Ascending aorta (tissue), 2 donors: ENCODE measurements at regions of chr3 and their contacts with region 1.

Region 1: DNA sequence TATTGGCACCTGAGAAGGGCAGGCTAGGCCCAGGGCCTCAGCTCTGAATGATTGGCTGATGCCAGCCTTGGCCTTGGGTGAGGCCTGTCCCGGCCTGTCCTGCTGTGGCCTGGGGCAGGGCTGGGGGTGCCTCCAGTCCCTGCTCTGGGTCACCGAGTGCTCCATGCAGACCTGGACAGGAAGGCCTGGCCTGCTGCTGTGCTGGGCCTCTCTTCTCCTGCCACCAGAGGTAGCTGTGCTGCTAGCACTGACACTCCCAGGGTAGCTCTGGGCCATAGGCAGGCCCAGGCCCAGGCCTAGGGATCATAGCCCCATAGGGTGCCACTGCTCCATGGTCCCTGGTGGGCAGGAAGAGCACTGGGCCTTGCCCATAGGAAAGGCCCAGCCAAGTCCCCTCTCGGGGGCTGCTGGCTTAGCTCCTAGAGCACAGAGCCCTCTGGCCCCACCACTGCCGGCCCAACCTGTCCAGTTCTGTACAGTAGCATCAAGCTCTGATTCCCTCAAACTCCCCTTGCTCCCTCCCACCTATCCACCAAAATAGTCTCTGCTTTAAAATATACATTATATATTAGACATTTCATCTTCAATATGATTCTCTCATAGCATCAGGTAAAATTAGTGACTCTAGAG is 18.2 kb downstream of the ABTB1 start:
- DNase-seq: no peak
- H3K4me3 ChIP-seq: no peak overlapping the region
- H3K27ac ChIP-seq: peak overlapping the region; percentile 85 to 89
- H3K4me1 ChIP-seq: peaks cover 29 to 32% of the 10 kb centered on the region in 2 donors
- H3K27me3 ChIP-seq: no peaks in the 10 kb centered on the region
- CTCF ChIP-seq: peak; percentile 60 to 73 (median 71)

Region 2: GRCh38 chr3:127015282-127016042 is 675.5 kb before region 1 on chr3:
- intact Hi-C with region 1: no loop called
- DNase-seq: no peak
- H3K4me3 ChIP-seq: no peak overlapping the region
- H3K27ac ChIP-seq: peak overlapping the region; percentile 64 to 76
- H3K4me1 ChIP-seq: peaks cover 26 to 51% of the 10 kb centered on the region in 2 donors
- H3K27me3 ChIP-seq: no peaks in the 10 kb centered on the region
- CTCF ChIP-seq: no peak

Region 3: DNA sequence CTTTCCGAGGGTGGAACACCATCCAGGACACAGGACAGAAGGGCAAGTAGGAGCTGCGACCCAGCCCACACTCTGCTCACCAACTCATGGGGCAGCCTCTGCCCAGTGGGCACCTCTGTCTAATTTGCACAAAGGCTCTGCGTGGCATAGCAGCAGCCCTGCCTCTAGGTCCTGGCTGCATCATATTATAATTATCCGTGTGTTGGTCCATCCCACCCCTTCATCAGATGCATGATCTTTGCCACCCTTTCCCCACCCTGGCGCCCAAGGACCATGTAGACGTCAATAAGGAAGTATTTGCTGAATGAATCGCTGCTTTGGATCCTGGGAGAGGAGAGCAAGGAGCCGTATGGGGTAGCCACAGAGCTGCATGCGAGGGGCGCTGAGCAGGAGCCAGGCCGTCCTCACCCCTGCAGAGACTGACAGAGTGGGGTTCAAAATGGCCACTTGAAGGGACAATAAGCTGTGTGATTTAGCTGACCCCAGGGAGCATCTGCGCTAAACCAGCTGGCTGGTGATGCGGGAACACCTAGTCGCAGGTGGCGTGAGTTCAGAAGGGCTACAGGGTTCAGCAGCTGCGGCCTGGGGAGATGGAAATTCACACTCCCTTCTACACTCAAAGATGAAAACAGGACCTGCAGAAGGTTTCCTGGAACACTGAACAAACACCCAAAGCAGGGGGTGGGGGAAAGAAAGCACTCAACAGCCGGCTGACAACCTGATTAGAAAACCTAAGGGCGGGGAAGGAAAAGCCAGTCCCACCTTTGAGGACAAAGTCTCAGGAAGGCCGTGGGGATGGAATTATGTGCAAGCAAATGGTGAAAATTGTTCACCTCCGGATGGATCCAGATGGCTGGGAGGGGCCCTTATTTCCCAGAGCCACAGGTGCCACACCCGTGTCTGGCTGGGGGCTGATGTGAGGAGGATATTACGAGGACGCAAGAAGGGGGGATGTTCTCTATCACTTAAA is 125.0 kb after region 1 on chr3:
- intact Hi-C with region 1: no loop called
- DNase-seq: no peak
- H3K4me3 ChIP-seq: no peak overlapping the region
- H3K27ac ChIP-seq: no peak overlapping the region
- H3K4me1 ChIP-seq: peaks cover 0 to 7% of the 10 kb centered on the region in 2 donors
- H3K27me3 ChIP-seq: no peaks in the 10 kb centered on the region
- CTCF ChIP-seq: no peak

Region 4: GRCh38 chr3:127857333-127857732 is 166.4 kb after region 1 on chr3:
- intact Hi-C with region 1: loop called (anchors 1 kb)
- DNase-seq: no peak
- H3K4me3 ChIP-seq: no peak overlapping the region
- H3K27ac ChIP-seq: no peak overlapping the region
- H3K4me1 ChIP-seq: no peaks in the 10 kb centered on the region
- H3K27me3 ChIP-seq: no peaks in the 10 kb centered on the region
- CTCF ChIP-seq: peak in 1 of 3 experiments; percentile 28

Region 5: DNA sequence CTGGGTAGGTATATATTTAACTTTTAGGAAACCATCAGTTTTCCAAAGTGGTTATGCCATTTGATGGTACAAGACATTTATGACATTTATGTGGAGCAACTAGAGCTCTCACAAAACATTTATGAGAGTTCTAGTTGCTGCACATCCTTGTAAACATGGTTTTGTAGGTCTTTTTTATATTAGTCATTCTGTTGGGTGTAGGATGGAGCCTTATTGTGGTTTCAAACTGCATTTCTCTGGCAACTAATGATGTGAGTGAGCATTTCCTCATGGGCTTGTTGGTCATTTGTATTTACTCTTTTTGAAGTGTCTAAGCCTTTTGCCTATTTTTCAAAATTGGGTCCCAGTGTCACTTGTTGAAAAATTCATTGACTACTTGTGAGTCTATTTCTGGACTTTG is 177.0 kb after region 1 on chr3:
- intact Hi-C with region 1: no loop called
- DNase-seq: no peak
- H3K4me3 ChIP-seq: no peak overlapping the region
- H3K27ac ChIP-seq: no peak overlapping the region
- H3K4me1 ChIP-seq: no peaks in the 10 kb centered on the region
- H3K27me3 ChIP-seq: no peaks in the 10 kb centered on the region
- CTCF ChIP-seq: no peak